ENCODE measurements at regions of chr7 and their contacts with region 1.

Region 1: DNA sequence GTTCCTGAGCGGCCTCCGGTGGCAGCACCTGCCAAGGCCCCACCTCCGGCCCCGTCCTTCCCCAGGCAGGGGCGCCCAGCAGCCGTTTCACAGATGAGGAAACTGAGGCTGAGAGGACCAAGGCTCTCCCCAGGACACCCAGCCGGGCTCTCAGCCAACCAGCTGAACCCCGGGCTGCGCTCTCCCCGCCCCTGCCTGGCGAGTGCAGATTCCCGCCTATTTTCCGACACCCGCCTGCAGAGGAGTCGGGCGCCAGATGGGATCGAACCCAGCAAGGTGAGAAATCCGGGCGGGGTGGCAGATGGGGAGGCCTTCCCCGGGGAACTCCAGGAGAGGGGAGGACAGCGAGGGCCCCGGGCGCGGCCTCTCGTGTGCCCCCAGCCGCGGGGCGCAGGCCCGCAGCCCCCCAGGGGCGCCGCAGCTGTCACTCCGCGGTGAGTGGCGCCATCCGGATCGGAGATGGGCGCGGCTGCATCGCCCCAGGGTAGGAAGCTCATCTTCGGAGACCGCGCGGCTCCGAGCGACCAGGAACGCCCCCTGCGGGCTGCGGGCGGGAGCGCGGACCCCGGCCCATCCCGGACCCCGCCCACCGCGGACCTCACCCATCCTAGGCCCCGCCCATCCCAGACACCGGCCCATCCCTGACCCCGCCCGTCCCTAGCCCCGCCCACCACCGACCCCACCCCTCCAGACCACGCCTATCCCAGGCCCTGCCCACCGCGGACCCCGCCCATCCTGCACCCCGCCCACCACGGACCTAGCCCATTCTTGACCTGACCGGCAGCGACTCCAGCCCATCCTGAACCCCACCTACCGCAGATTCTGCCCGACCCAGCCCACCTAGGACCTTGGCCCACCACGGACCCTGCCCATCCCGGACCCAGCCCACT is 90.3 kb downstream of the MICALL2 start:
- DNase-seq: peak; percentile 97
- ATAC-seq: peak; percentile 87
- H3K4me3 Mint-ChIP-seq: peak overlapping the region; percentile 62
- H3K27ac Mint-ChIP-seq: no peak overlapping the region
- H3K4me1 Mint-ChIP-seq: peaks cover 7% of the 10 kb centered on the region
- H3K27me3 Mint-ChIP-seq: peaks cover 38% of the 10 kb centered on the region
- CTCF ChIP-seq: peak; percentile 66

Region 2: DNA sequence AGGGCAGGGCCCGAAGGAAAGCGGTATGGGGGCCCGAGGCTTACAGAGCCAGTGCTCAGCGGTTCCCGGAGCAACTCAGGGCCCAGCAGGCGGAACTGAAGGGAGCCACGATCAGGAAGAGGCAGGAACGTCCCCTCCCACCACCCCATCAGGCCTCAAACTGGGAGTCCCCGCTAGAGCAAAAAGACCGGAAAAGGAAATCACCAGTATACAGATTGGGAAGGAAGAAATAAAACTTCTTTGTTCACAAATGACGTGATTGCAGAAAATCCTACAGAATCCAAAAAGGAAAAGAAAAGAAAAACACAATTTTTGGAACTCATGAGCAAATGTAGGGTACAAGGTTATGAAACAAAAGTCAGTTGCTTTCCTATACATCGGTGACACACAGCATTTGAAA is 187.3 kb before region 1 on chr7:
- CTCF ChIA-PET with region 1: interaction called, 11 read pairs
- POLR2A ChIA-PET with region 1: no interaction called
- DNase-seq: no peak
- ATAC-seq: no peak
- H3K4me3 Mint-ChIP-seq: no peak overlapping the region
- H3K27ac Mint-ChIP-seq: no peak overlapping the region
- H3K4me1 Mint-ChIP-seq: no peaks in the 10 kb centered on the region
- H3K27me3 Mint-ChIP-seq: peaks cover 9% of the 10 kb centered on the region
- CTCF ChIP-seq: no peak

Region 3: DNA sequence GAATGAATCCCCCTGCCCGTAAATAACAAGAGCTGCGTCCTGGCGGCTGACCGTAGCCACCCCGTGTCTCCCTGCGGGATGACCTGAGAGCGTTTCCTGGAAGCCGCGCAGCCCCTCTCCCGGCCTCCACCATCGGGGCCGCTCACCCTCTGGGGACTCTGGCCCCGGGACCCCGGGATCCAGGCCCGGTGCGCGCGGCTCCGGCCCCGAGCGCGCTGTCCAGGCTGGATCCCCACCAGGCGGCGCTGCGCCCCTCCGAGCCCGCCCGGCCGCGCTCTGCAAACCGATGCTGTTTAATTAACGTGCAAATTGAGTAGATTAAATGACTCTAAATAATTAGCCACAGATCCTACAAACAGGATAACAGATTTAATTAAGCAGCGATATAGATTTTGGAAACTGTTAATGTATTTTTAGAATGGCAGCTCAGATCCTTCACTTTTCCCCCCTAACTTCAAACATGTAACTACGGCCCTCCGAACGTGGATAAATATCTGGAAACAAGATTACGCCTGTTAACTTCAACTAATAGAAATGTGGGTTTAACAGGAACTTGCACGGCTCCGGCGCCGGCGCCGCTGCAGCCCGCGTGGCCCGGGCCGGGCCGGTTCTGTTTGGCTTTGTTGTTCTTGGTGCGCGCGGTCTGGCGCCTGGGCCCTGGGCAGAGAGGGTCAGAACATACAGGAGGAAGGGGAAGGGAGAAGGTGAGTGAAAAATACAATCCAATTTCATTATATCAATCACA is 143.3 kb before region 1 on chr7:
- CTCF ChIA-PET with region 1: interaction called, 16 read pairs
- POLR2A ChIA-PET with region 1: no interaction called
- DNase-seq: peak; percentile 68
- ATAC-seq: peak; percentile 13; the same call in 1 of the 2 replicates
- H3K4me3 Mint-ChIP-seq: peak overlapping the region; percentile 52
- H3K27ac Mint-ChIP-seq: no peak overlapping the region
- H3K4me1 Mint-ChIP-seq: peaks cover 33% of the 10 kb centered on the region
- H3K27me3 Mint-ChIP-seq: peaks cover 95% of the 10 kb centered on the region
- CTCF ChIP-seq: peak; percentile 82

Region 4: GRCh38 chr7:1386623-1387220 is 17.8 kb after region 1 on chr7:
- CTCF ChIA-PET with region 1: interaction called, 12 read pairs
- POLR2A ChIA-PET with region 1: no interaction called
- DNase-seq: no peak
- ATAC-seq: no peak
- H3K4me3 Mint-ChIP-seq: no peak overlapping the region
- H3K27ac Mint-ChIP-seq: no peak overlapping the region
- H3K4me1 Mint-ChIP-seq: no peaks in the 10 kb centered on the region
- H3K27me3 Mint-ChIP-seq: peaks cover 3% of the 10 kb centered on the region; the same call in 1 of the 2 replicates
- CTCF ChIP-seq: no peak

Region 5: GRCh38 chr7:1403638-1404459 is 34.9 kb after region 1 on chr7:
- CTCF ChIA-PET with region 1: interaction called, 20 read pairs
- POLR2A ChIA-PET with region 1: no interaction called
- DNase-seq: peak; percentile 38
- ATAC-seq: peak; percentile 55
- H3K4me3 Mint-ChIP-seq: peak overlapping the region; percentile 71
- H3K27ac Mint-ChIP-seq: no peak overlapping the region
- H3K4me1 Mint-ChIP-seq: peaks cover 11% of the 10 kb centered on the region
- H3K27me3 Mint-ChIP-seq: peaks cover 41% of the 10 kb centered on the region
- CTCF ChIP-seq: no peak

Region 6: GRCh38 chr7:1412322-1413261 is 43.7 kb after region 1 on chr7:
- CTCF ChIA-PET with region 1: interaction called, 12 read pairs
- POLR2A ChIA-PET with region 1: no interaction called
- DNase-seq: peak; percentile 95
- ATAC-seq: peak; percentile 95
- H3K4me3 Mint-ChIP-seq: peak overlapping the region; percentile 55
- H3K27ac Mint-ChIP-seq: no peak overlapping the region
- H3K4me1 Mint-ChIP-seq: peaks cover 6% of the 10 kb centered on the region; the same call in 1 of the 2 replicates
- H3K27me3 Mint-ChIP-seq: peaks cover 21% of the 10 kb centered on the region
- CTCF ChIP-seq: peak; percentile 85; the same call in 1 of the 2 replicates

Region 7: GRCh38 chr7:1418505-1419309 is 49.8 kb after region 1 on chr7:
- CTCF ChIA-PET with region 1: interaction called, 15 read pairs
- POLR2A ChIA-PET with region 1: no interaction called
- DNase-seq: peak; percentile 79
- ATAC-seq: peak; percentile 74
- H3K4me3 Mint-ChIP-seq: no peak overlapping the region
- H3K27ac Mint-ChIP-seq: peak overlapping the region; percentile 41
- H3K4me1 Mint-ChIP-seq: peaks cover 12% of the 10 kb centered on the region
- H3K27me3 Mint-ChIP-seq: peaks cover 4% of the 10 kb centered on the region
- CTCF ChIP-seq: no peak

Region 8: GRCh38 chr7:1539181-1539643 is 170.3 kb after region 1 on chr7:
- CTCF ChIA-PET with region 1: no interaction called
- POLR2A ChIA-PET with region 1: no interaction called
- DNase-seq: no peak
- ATAC-seq: no peak
- H3K4me3 Mint-ChIP-seq: no peak overlapping the region
- H3K27ac Mint-ChIP-seq: no peak overlapping the region
- H3K4me1 Mint-ChIP-seq: peaks cover 10% of the 10 kb centered on the region
- H3K27me3 Mint-ChIP-seq: no peaks in the 10 kb centered on the region
- CTCF ChIP-seq: no peak